ENCODE measurements at regions of chr11 and their contacts with region 1.

Region 1: DNA sequence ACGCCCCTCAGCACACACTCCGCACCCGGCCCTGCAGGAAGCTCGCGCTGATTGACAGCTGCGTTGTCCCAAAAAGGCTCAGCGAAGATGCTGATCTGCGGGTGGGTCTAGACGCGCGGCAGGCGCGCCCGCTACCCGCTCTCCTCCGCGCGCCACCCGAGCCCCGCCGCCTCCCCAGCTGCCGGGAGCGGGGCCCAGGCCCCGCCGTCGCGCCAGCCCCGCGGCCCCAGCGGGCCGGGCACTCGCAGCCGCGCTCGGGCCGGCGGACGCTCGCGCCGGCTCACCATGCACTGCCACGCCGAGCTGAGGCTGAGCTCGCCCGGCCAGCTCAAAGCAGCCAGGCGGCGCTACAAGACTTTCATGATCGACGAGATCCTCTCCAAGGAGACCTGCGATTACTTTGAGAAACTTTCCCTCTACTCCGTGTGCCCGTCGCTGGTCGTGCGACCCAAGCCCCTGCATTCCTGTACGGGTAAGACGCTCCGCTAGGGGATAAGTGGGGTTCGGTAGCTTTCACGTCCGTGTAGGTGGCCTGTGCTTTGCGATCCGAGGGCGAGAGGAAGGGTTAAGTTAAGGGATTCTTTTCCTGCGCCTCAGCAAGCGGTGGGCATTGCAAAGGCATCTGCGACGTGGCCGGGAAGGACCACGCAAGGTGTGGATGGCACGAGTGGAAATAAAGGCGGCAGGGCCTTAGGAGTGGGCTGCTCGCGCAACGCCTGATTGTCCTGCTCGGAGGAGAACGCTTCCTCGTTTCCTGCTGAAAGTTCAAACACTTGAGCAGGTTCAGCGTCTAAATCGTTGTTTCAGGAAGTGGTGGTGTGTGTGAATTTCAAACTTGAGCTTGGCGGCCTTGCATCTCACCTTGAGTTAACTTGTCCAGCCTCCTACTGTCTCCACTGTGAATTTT is at the start of gene BARX2:
- DNase-seq: peak; percentile 20
- H3K4me3 Mint-ChIP-seq: peak within 1 kb of the TSS; percentile 77
- H3K27ac Mint-ChIP-seq: peak within 1 kb of the TSS; percentile 48
- H3K4me1 Mint-ChIP-seq: peaks cover 22% of the 10 kb centered on the region
- H3K27me3 Mint-ChIP-seq: peaks cover 81% of the 10 kb centered on the region
- total RNA-seq, gene BARX2: 4.7 and 4.9 TPM in 2 replicates

Region 2: GRCh38 chr11:129117595-129118350 is 258.2 kb before region 1 on chr11:
- intact Hi-C with region 1: loop called (anchors 5 kb)
- DNase-seq: no peak
- H3K4me3 Mint-ChIP-seq: no peak overlapping the region
- H3K27ac Mint-ChIP-seq: no peak overlapping the region
- H3K4me1 Mint-ChIP-seq: peaks cover 10% of the 10 kb centered on the region
- H3K27me3 Mint-ChIP-seq: peaks cover 7% of the 10 kb centered on the region

Region 3: DNA sequence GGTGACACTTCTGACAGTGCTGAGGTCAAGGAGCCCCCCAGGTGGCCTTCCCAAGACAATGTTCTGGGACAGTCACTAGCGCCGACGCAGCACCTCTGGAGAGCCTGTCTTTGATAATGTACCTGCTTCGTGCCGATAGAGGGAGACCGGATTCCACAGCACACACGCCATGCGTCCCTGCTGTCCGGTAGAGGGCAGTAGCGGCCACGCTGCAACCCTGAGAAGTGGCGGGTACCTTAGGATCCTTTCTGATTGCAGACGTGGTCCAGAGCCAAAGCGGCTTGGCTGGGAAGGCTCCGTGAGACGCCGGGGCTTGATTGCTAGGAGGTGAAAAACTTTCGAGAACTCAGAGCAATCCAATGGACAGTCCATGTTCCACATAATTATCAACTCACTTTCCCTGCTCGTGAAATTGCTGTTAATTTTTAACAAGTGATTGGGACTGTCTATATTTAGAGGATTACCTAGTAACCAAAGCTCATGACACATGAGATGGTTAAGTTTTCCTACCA is 11.8 kb before region 1 on chr11:
- intact Hi-C with region 1: loop called (anchors 1 kb)
- DNase-seq: peak; percentile 74
- H3K4me3 Mint-ChIP-seq: no peak overlapping the region
- H3K27ac Mint-ChIP-seq: no peak overlapping the region
- H3K4me1 Mint-ChIP-seq: peaks cover 5% of the 10 kb centered on the region
- H3K27me3 Mint-ChIP-seq: peaks cover 46% of the 10 kb centered on the region

Region 4: DNA sequence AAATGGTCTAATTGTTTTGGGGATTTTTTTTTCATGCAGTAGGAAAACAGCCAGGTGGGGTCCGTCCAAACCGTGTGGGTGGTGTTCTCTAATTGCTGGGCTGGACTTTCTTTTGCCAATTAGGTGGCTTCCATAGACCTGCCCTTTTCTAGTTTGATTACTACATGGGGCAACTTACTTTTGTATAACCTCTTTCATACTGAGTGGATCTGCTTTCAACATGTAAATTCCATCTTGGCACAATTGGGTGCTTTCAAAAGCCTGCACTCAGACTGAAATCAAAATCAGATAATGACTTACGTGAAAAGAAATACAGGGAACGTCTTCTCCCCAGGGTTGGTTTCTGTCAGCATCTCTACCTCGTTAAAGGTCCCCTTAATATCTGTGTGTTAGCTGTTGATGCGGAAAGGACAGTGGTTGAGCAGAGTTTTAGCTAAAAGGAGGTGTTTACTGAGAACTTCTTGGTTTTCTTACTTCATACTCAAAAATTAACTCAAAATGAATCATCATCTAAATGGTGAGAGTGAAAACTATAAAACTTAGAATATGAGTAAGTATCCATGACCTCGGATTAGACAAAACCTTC is 71.7 kb after region 1 on chr11:
- intact Hi-C with region 1: loop called (anchors 1 kb)
- DNase-seq: no peak
- H3K4me3 Mint-ChIP-seq: no peak overlapping the region
- H3K27ac Mint-ChIP-seq: peak overlapping the region; percentile 88
- H3K4me1 Mint-ChIP-seq: peaks cover 27% of the 10 kb centered on the region
- H3K27me3 Mint-ChIP-seq: no peaks in the 10 kb centered on the region

Region 5: GRCh38 chr11:129639300-129639699 is 263.3 kb after region 1 on chr11:
- intact Hi-C with region 1: loop called (anchors 5 kb)
- DNase-seq: no peak
- H3K4me3 Mint-ChIP-seq: no peak overlapping the region
- H3K27ac Mint-ChIP-seq: peak overlapping the region; percentile 85
- H3K4me1 Mint-ChIP-seq: peaks cover 68% of the 10 kb centered on the region
- H3K27me3 Mint-ChIP-seq: no peaks in the 10 kb centered on the region

Region 6: GRCh38 chr11:129695575-129696308 is 319.7 kb after region 1 on chr11:
- intact Hi-C with region 1: loop called (anchors 2 kb)
- DNase-seq: peak; percentile 41
- H3K4me3 Mint-ChIP-seq: peak overlapping the region; percentile 54
- H3K27ac Mint-ChIP-seq: no peak overlapping the region
- H3K4me1 Mint-ChIP-seq: peaks cover 11% of the 10 kb centered on the region
- H3K27me3 Mint-ChIP-seq: peaks cover 3% of the 10 kb centered on the region

Region 7: DNA sequence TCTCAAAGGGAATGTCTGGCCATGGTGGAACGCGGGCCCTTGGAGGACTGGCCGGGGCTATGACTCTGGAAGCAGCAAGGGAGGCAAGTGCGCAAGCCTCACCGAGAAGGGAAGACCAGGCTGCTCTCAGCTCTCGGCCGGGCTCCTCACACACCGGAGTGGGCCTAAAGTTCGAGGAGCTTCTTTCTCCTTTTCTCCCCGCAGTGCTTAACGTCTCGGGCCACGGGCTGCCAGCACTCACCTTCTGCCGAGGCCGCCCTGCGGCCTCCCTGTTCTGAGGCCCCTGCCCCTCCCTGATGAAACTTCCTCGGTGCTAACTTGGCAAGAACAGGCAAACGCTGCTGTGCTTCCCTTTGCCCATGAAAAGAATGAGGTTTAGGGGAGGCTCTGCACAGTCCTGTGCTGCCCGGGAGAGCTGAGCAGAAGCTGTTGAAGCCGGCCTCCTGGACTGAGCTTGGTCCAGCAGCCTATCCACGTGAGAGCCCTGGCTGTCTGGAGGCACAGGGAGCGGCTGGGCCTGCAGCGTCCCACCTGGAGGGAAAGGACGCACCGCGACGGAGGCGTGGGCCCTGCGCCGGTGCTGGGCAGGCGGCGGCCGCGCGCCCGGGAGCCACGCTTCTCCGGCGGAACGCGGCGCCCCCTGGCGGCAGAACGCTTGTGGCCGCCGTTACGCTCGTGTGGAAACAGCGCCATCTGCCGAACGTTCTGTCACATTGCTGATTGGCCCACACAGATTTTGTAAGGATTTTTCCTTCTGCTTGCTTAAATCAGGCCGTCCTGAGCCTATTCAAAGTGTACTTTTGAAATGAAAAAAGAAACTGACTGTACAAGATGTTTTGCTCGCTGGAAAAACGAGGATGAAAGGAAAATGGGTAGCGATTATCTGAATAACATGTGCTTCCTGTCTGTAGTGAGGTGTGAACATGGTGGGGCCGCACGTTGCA is 374.6 kb after region 1 on chr11:
- intact Hi-C with region 1: loop called (anchors 2 kb)
- DNase-seq: peak; percentile 72
- H3K4me3 Mint-ChIP-seq: no peak overlapping the region
- H3K27ac Mint-ChIP-seq: no peak overlapping the region
- H3K4me1 Mint-ChIP-seq: no peaks in the 10 kb centered on the region
- H3K27me3 Mint-ChIP-seq: peaks cover 18% of the 10 kb centered on the region